Heart left ventricle (tissue), 16 donors: ENCODE measurements at regions of chr18 and their contacts with region 1.

Region 1: GRCh38 chr18:50786864-50787263 is 33.0 kb downstream of the MRO start:
- DNase-seq: no peak
- ATAC-seq: no peak
- H3K4me3 ChIP-seq: no peak overlapping the region
- H3K27ac ChIP-seq: no peak overlapping the region
- H3K4me1 ChIP-seq: no peaks in the 10 kb centered on the region
- H3K27me3 ChIP-seq: no peaks in the 10 kb centered on the region
- CTCF ChIP-seq: no peak
- POLR2A ChIP-seq: no peak

Region 2: GRCh38 chr18:50687491-50688270 is 99.2 kb before region 1 on chr18:
- intact Hi-C with region 1: loop called in 1 of 10 experiments (anchors 10 kb)
- DNase-seq: no peak
- ATAC-seq: no peak
- H3K4me3 ChIP-seq: no peak overlapping the region
- H3K27ac ChIP-seq: no peak overlapping the region
- H3K4me1 ChIP-seq: peaks cover 0 to 3% (median 0%) of the 10 kb centered on the region in 12 donors
- H3K27me3 ChIP-seq: no peaks in the 10 kb centered on the region
- CTCF ChIP-seq: no peak
- POLR2A ChIP-seq: no peak

Region 3: DNA sequence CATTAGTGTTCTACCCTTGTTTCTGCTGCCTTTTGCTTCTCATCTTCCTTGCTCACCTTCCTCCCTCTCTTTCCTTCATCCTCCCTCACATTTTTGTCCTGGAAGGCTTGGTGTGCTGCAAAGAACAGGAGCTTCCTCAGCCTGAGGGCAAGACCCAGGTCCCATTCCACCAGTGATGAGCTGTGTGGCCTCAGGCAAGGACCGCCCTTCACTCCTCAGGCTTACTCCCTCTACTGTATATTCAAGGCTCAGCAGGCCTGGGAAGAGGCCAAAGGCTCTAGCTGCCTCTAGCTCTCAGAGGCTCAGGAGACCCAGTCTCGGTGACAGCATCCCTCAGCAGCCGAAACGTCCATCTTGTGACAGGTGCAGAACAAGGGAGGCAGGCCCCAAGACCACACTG is 64.6 kb before region 1 on chr18:
- intact Hi-C with region 1: no loop called
- DNase-seq: no peak
- ATAC-seq: no peak
- H3K4me3 ChIP-seq: no peak overlapping the region
- H3K27ac ChIP-seq: no peak overlapping the region
- H3K4me1 ChIP-seq: peaks cover 0 to 23% (median 9%) of the 10 kb centered on the region in 12 donors
- H3K27me3 ChIP-seq: no peaks in the 10 kb centered on the region
- CTCF ChIP-seq: no peak
- POLR2A ChIP-seq: no peak